ENCODE measurements at regions of chr10 and their contacts with region 1.

Region 1: DNA sequence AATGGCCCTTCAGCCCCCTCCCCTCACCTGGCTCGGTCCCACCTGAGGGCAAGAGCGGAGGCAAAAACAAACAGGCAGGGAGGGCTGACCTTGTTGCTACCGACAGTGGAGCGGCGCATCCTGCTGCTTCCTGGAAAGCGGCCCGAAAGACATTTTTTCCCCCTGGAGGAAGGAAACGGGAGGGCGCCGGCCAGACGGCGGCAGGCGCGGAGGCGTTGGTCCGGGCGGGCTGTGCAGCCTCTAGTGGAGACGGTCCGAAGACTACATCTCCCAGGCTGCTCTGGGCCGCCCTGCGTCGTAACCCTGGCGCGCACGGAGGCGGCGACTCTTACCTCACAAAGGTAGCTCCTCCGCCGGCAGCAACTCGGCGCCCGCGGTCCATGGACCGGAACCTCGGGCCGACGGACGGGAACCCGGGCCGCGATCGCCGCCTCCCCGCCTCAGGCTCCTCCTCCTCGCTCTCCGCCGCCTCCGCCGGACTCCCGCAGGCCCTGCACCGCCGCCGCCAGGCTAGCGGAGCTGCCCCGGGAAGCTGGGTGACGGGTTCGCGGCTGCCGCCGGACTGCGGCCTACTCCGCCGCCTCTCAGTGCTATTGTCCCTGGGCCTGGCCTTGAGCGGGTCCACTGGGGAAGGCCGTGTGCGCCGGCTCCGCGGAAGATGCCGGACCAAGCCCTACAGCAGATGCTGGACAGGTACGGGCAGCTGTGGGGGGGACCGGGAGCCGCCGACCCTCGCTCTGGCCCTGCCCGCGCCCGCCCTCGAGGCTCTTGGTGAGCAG is at the starts of genes CPEB3 and MARCHF5:
- DNase-seq: peak; percentile 98
- ATAC-seq: peak; percentile 98
- H3K4me3 Mint-ChIP-seq: peak within 1 kb of the TSS; percentile 95
- H3K27ac Mint-ChIP-seq: peak within 1 kb of the TSS; percentile 93
- H3K4me1 Mint-ChIP-seq: peaks cover 20% of the 10 kb centered on the region
- H3K27me3 Mint-ChIP-seq: no peaks in the 10 kb centered on the region; the same call in 1 of the 2 replicates
- CTCF ChIP-seq: no peak; the same call in 1 of the 2 replicates
- total RNA-seq, gene CPEB3: 1.9 to 2.4 TPM (median 2.4 TPM) in 3 replicates
- total RNA-seq, gene MARCHF5: 26.7 to 32.2 TPM (median 26.8 TPM) in 3 replicates

Region 2: GRCh38 chr10:91923371-91924211 is 367.4 kb before region 1 on chr10 and contains the start of gene BTAF1:
- CTCF ChIA-PET with region 1: no interaction called
- POLR2A ChIA-PET with region 1: no interaction called
- DNase-seq: peak; percentile 86
- ATAC-seq: peak; percentile 94
- H3K4me3 Mint-ChIP-seq: peak within 1 kb of the TSS; percentile 90
- H3K27ac Mint-ChIP-seq: peak within 1 kb of the TSS; percentile 97
- H3K4me1 Mint-ChIP-seq: peaks cover 27% of the 10 kb centered on the region
- H3K27me3 Mint-ChIP-seq: peaks cover 5% of the 10 kb centered on the region; the same call in 1 of the 2 replicates
- CTCF ChIP-seq: no peak
- total RNA-seq, gene BTAF1: 47.2 to 49.6 TPM (median 49.2 TPM) in 3 replicates

Region 3: GRCh38 chr10:92087750-92088395 is 203.2 kb before region 1 on chr10:
- CTCF ChIA-PET with region 1: interaction called, 13 read pairs
- POLR2A ChIA-PET with region 1: interaction called, 5 read pairs
- DNase-seq: peak; percentile 75
- ATAC-seq: peak; percentile 100
- H3K4me3 Mint-ChIP-seq: no peak overlapping the region
- H3K27ac Mint-ChIP-seq: peak overlapping the region; percentile 84
- H3K4me1 Mint-ChIP-seq: peaks cover 23% of the 10 kb centered on the region
- H3K27me3 Mint-ChIP-seq: no peaks in the 10 kb centered on the region
- CTCF ChIP-seq: peak; percentile 48

Region 4: DNA sequence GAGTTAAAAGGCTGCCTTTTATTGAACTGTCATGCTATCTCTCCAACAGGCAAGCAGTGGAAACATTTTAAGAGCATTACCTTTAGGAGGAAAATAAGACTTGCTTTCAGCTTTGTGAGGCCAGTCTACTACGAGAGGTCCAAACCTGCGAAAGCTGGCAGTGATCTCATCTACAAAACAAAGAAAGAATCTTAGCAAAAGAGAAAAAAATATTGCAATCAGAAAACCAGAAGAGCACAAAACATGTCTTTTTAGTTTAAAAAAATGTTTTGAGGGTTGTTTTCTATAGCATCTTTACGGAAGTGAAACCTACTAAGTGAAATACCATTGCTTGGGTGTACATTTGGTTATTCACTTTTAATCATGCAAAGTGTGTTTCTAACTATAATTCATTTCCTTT is 148.1 kb before region 1 on chr10:
- CTCF ChIA-PET with region 1: no interaction called
- POLR2A ChIA-PET with region 1: no interaction called
- DNase-seq: no peak
- ATAC-seq: no peak
- H3K4me3 Mint-ChIP-seq: no peak overlapping the region
- H3K27ac Mint-ChIP-seq: no peak overlapping the region
- H3K4me1 Mint-ChIP-seq: no peaks in the 10 kb centered on the region
- H3K27me3 Mint-ChIP-seq: no peaks in the 10 kb centered on the region
- CTCF ChIP-seq: no peak

Region 5: DNA sequence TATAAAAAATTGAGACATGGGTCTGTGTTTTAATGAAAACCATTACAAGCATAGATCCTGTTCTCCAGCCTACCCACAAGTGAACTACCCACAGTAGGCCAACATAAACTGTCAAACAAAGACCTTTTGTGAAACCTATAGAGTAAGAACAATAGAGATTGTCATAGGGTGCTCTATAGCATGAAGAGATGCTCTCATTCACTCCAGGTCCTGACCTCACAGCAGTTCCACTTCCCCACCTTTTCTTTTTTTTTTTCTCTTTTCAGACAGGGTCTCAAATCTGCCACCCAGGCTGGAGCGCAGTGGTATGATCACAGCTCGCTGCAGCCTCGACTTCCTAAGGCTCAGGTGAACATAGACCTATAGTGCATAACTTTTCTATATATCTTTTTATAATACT is 72.5 kb before region 1 on chr10:
- CTCF ChIA-PET with region 1: interaction called, 21 read pairs
- POLR2A ChIA-PET with region 1: no interaction called
- DNase-seq: no peak
- ATAC-seq: no peak
- H3K4me3 Mint-ChIP-seq: no peak overlapping the region
- H3K27ac Mint-ChIP-seq: no peak overlapping the region
- H3K4me1 Mint-ChIP-seq: peaks cover 21% of the 10 kb centered on the region
- H3K27me3 Mint-ChIP-seq: no peaks in the 10 kb centered on the region
- CTCF ChIP-seq: no peak

Region 6: GRCh38 chr10:92240289-92241157 is 50.5 kb before region 1 on chr10:
- CTCF ChIA-PET with region 1: interaction called, 14 read pairs
- POLR2A ChIA-PET with region 1: interaction called, 8 read pairs
- DNase-seq: peak; percentile 19
- ATAC-seq: peak; percentile 43
- H3K4me3 Mint-ChIP-seq: peak overlapping the region; percentile 91
- H3K27ac Mint-ChIP-seq: peak overlapping the region; percentile 91
- H3K4me1 Mint-ChIP-seq: peaks cover 36% of the 10 kb centered on the region
- H3K27me3 Mint-ChIP-seq: peaks cover 40% of the 10 kb centered on the region
- CTCF ChIP-seq: no peak

Region 7: DNA sequence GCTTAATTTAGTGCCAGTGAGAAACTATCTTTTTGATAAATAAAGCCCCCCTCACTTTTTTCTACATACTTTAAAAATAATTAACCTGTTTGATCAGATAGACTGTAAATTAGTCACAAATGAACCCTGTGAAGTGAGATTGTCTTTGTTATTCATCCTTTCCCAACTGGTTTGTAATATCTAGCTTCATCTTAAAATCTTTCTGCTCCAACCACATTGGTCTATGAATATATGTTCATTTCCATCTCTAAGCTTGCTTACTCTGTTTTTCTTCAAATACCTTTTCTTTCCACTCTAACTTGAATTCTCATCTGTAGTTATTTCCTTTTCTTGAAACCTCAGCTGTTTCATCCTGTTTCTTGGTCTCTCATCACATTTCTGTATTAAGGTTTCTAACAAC is 12.1 kb after region 1 on chr10:
- CTCF ChIA-PET with region 1: interaction called, 14 read pairs
- POLR2A ChIA-PET with region 1: interaction called, 3 read pairs
- DNase-seq: no peak
- ATAC-seq: no peak
- H3K4me3 Mint-ChIP-seq: no peak overlapping the region
- H3K27ac Mint-ChIP-seq: peak overlapping the region; percentile 61
- H3K4me1 Mint-ChIP-seq: peaks cover 61% of the 10 kb centered on the region
- H3K27me3 Mint-ChIP-seq: no peaks in the 10 kb centered on the region
- CTCF ChIP-seq: no peak

Region 8: GRCh38 chr10:92419740-92420545 is 128.9 kb after region 1 on chr10:
- CTCF ChIA-PET with region 1: interaction called, 13 read pairs
- POLR2A ChIA-PET with region 1: interaction called, 4 read pairs
- DNase-seq: peak; percentile 63
- ATAC-seq: peak; percentile 82
- H3K4me3 Mint-ChIP-seq: peak overlapping the region; percentile 74
- H3K27ac Mint-ChIP-seq: peak overlapping the region; percentile 84; the same call in 1 of the 2 replicates
- H3K4me1 Mint-ChIP-seq: peaks cover 24% of the 10 kb centered on the region
- H3K27me3 Mint-ChIP-seq: peaks cover 24% of the 10 kb centered on the region
- CTCF ChIP-seq: no peak